Endothelial cell of umbilical vein (primary cell): ENCODE measurements at regions of chr5 and their contacts with region 1.

Region 1: GRCh38 chr5:147539053-147539452 is 29.2 kb upstream of the DPYSL3 start:
- DNase-seq: peak; percentile 53
- H3K4me3 ChIP-seq: no peak overlapping the region
- H3K27ac ChIP-seq: no peak overlapping the region
- H3K4me1 ChIP-seq: peaks cover 33% of the 10 kb centered on the region
- H3K27me3 ChIP-seq: no peaks in the 10 kb centered on the region
- CTCF ChIP-seq: no peak
- POLR2A ChIP-seq: no peak

Region 2: GRCh38 chr5:147464211-147464610 is 74.8 kb before region 1 on chr5:
- CTCF ChIA-PET with region 1: interaction called, 13 read pairs
- POLR2A ChIA-PET with region 1: no interaction called
- dilution Hi-C with region 1: no loop called
- intact Hi-C with region 1: loop called (anchors 1 kb)
- DNase-seq: peak; percentile 81
- H3K4me3 ChIP-seq: no peak overlapping the region
- H3K27ac ChIP-seq: no peak overlapping the region
- H3K4me1 ChIP-seq: peaks cover 10% of the 10 kb centered on the region
- H3K27me3 ChIP-seq: no peaks in the 10 kb centered on the region
- CTCF ChIP-seq: peak; percentile 55 to 61
- POLR2A ChIP-seq: no peak